ENCODE measurements at regions of chr12 and their contacts with region 1.

Region 1: DNA sequence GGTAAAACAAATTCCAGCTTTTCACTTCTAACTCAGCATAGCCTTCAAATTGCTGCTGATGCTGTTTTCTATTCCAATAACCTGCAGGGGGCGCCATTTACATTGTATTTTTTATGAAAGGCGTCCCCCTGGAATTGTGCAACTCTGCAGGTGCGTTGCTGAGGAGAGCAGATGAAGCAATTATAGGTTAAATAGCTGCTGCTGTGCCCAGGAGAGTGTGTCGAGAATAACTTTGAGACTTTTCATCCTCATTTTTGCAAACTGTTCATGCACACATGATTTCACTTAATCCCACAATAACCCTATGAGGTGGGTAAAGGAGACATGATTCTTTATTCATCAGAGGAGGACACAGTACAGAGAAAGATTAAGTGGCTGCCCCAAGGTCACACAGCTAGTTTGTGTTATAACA is 75.7 kb downstream of the MYRFL start:
- DNase-seq: peak; percentile 85
- H3K4me3 Mint-ChIP-seq: no peak overlapping the region
- H3K27ac Mint-ChIP-seq: no peak overlapping the region
- H3K4me1 Mint-ChIP-seq: no peaks in the 10 kb centered on the region
- H3K27me3 Mint-ChIP-seq: no peaks in the 10 kb centered on the region
- CTCF ChIP-seq: peak; percentile 92

Region 2: DNA sequence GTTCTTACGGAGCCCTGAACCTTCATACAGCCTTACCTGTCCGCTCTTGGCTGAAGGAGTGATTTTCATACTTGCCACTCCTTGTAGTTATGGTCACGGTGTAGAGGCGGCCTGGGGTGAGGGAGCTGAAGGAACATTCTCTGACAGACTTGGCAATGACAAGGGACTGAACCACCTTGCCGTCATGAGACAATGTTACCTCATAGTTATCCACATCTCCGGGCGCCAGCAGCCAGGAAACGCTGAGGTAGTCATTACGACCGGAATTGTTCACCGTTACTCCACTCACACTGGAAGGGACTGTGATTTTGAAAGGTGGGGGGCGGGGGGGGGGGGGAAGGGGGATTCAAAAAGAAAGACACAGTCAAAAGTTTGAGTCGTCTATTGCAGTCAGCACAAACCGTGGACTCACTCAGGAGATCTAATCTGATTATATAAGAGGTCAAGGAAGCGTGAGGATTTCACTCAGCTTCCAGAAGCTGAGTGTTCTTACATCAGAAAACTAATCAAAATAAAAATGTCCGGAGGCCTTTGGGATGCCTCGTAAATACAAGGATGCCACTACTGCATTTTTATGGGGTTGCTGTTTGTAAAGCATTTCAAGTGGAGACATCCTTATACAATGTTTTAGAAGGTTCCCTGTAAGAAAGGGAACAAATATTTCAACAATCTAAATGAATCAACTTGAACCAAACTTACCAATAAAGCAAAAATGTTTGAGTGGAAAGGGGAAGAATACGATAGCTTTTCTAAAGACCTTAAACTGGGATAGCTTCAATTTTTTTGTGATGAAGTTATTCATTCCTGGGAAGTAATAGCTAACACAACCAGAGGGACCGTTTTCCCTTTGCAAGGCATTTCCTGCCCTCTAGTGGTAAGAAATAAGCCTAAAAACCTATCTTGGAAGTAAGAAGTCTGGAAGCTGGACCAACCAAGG is 675.9 kb after region 1 on chr12:
- CTCF ChIA-PET with region 1: interaction called, 3 read pairs
- intact Hi-C with region 1: loop called (anchors 5 kb)
- DNase-seq: peak; percentile 12
- H3K4me3 Mint-ChIP-seq: no peak overlapping the region
- H3K27ac Mint-ChIP-seq: no peak overlapping the region
- H3K4me1 Mint-ChIP-seq: no peaks in the 10 kb centered on the region
- H3K27me3 Mint-ChIP-seq: no peaks in the 10 kb centered on the region
- CTCF ChIP-seq: peak; percentile 70